Calu3 (cell line): ENCODE measurements at regions of chr1 and their contacts with region 1.

Region 1: GRCh38 chr1:39196244-39197215 is 8.0 kb upstream of the MACF1 start:
- DNase-seq: no peak
- H3K4me3 Mint-ChIP-seq: no peak overlapping the region
- H3K27ac Mint-ChIP-seq: peak overlapping the region; percentile 57
- H3K4me1 Mint-ChIP-seq: peaks cover 46% of the 10 kb centered on the region
- H3K27me3 Mint-ChIP-seq: no peaks in the 10 kb centered on the region
- CTCF ChIP-seq: no peak

Region 2: DNA sequence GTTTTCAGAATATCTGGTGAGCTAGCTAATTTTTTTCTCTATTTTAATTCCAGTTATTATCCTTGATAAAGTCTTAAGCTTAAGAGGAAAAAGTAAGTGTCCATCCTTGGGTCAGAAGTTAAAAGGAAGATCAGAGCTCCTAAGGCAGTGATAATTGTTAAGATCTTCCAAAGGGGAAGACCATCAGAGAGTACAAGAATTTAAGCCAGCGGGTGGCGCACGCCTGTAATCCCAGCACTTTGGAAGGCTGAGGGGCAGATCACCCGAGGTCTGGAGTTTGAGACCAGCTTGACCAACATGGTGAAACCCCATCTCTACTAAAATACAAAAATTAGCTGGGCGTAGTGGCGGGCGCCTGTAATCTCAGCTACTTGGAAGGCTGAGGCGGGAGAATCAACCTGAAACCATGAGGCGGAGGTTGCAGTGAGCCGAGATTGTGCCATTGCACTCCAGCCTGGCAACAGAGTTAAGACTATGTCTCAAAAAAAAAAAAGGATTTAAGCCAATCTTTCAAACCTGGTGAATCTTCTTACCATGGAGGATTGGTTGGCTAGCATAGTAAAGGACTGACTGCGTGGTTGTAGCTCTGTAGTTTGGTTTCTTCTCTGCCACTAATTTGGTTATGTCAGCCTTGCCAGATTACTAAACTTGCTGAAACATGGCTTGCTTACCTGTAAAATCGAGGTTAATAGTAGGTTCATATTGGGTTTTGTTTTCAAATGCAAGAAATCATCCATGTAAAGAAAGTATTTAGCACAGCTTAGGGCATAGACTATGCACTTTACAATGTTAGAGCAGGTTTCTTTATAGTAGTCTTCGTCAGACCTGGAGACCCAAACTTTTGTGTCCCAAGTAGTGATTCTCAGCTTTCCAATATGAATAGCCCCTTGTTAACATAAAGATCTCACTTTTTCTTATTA is 189.5 kb before region 1 on chr1:
- CTCF ChIA-PET with region 1: no interaction called
- intact Hi-C with region 1: no loop called
- DNase-seq: no peak
- H3K4me3 Mint-ChIP-seq: no peak overlapping the region
- H3K27ac Mint-ChIP-seq: no peak overlapping the region
- H3K4me1 Mint-ChIP-seq: peaks cover 6% of the 10 kb centered on the region
- H3K27me3 Mint-ChIP-seq: no peaks in the 10 kb centered on the region
- CTCF ChIP-seq: no peak

Region 3: DNA sequence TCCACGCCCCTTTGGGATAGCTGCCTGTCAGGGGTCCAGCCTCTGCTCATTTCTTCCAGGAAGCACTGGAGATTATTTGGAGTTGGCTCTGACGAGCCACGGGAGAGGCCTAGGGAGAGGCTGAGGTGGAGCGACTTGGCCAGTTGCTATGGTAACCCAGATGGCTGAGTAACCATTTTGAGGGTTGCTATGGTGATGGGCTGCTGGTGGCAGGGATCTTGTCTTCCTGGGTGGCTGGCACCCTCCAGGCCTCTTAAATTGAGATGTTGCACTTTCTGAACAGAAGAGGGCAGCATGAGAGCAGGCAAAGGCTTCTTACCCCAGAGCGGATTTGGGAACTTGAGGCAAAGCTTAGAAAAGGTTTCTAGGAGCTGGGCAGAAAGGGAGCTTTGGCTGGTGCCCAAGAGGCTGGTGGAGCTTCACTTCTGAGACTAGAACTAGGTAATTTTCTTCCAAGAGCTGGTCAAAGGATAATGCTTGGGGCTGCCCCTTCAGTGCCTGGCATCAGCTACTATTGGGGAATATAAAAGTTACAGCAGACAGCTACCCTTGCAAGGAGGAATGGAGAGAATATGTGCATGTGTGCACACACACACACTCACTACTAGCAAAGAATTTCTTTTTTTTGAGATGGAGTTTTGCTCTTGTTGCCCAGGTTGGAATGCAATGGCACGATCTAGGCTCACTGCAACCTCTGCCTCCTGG is 97.8 kb before region 1 on chr1:
- CTCF ChIA-PET with region 1: interaction called, 33 read pairs
- intact Hi-C with region 1: loop called (anchors 1 kb)
- DNase-seq: peak; percentile 78
- H3K4me3 Mint-ChIP-seq: no peak overlapping the region
- H3K27ac Mint-ChIP-seq: peak overlapping the region; percentile 60
- H3K4me1 Mint-ChIP-seq: peaks cover 25% of the 10 kb centered on the region
- H3K27me3 Mint-ChIP-seq: no peaks in the 10 kb centered on the region
- CTCF ChIP-seq: peak; percentile 75

Region 4: GRCh38 chr1:39132505-39133339 is 63.8 kb before region 1 on chr1:
- CTCF ChIA-PET with region 1: interaction called, 30 read pairs
- intact Hi-C with region 1: loop called (anchors 2 kb)
- DNase-seq: peak; percentile 85
- H3K4me3 Mint-ChIP-seq: peak overlapping the region; percentile 30
- H3K27ac Mint-ChIP-seq: peak overlapping the region; percentile 79
- H3K4me1 Mint-ChIP-seq: peaks cover 50% of the 10 kb centered on the region
- H3K27me3 Mint-ChIP-seq: no peaks in the 10 kb centered on the region
- CTCF ChIP-seq: peak; percentile 38

Region 5: DNA sequence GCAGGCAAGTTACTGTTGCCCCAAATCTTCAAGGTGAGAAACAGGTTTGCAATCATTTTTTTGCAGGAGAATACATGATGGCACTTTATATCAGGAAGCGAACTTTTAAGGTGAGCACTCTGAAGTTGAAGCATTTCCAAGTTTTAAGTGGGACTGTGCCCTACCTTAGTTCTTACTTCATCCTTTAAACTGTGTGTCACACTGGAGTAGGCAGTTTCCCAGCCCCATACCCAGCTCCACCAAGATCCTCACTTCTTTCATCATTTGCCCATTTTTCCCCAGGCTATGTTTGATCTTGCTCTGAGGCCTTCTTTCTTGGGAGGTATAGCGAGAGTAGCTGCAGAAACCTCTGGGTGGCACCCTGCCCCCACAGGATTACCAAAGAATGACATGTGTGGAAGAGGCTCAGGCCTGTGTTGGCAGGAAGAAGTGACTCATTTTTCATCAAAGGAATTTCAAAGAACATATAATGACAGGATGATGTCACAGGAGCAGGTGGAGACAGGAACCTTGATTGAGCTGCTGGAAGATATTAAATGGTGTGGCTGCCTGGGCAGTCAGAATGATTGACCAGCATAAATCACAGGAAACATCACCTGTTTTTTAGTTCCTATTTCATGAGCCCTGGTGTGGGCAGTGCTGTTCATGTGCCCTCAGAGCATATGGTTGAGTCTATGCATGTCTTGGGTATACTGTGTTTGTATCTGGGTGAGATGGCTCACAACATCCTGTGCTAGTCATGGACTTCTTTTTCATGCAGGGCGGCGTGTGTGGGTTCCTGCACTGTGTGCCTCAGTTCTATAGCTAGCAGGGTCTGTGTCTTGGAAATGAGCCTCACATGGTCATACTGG is 12.8 kb before region 1 on chr1:
- CTCF ChIA-PET with region 1: interaction called, 17 read pairs
- intact Hi-C with region 1: no loop called
- DNase-seq: peak; percentile 89
- H3K4me3 Mint-ChIP-seq: peak overlapping the region; percentile 51
- H3K27ac Mint-ChIP-seq: peak overlapping the region; percentile 91
- H3K4me1 Mint-ChIP-seq: peaks cover 80% of the 10 kb centered on the region
- H3K27me3 Mint-ChIP-seq: no peaks in the 10 kb centered on the region
- CTCF ChIP-seq: peak; percentile 48

Region 6: GRCh38 chr1:39258146-39258924 is 61.8 kb after region 1 on chr1:
- CTCF ChIA-PET with region 1: interaction called, 51 read pairs
- intact Hi-C with region 1: loop called (anchors 2 kb)
- DNase-seq: peak; percentile 76
- H3K4me3 Mint-ChIP-seq: no peak overlapping the region
- H3K27ac Mint-ChIP-seq: no peak overlapping the region
- H3K4me1 Mint-ChIP-seq: no peaks in the 10 kb centered on the region
- H3K27me3 Mint-ChIP-seq: no peaks in the 10 kb centered on the region
- CTCF ChIP-seq: peak; percentile 81